ENCODE measurements at regions of chr2 and their contacts with region 1.

Region 1: GRCh38 chr2:85420536-85421259 is 2.2 kb downstream of the SH2D6 start:
- DNase-seq: peak; percentile 79
- H3K4me3 ChIP-seq: no peak overlapping the region
- H3K27ac ChIP-seq: peak overlapping the region; percentile 90
- H3K4me1 ChIP-seq: peaks cover 25% of the 10 kb centered on the region
- H3K27me3 ChIP-seq: no peaks in the 10 kb centered on the region
- CTCF ChIP-seq: peak; percentile 100
- POLR2A ChIP-seq: no peak

Region 2: DNA sequence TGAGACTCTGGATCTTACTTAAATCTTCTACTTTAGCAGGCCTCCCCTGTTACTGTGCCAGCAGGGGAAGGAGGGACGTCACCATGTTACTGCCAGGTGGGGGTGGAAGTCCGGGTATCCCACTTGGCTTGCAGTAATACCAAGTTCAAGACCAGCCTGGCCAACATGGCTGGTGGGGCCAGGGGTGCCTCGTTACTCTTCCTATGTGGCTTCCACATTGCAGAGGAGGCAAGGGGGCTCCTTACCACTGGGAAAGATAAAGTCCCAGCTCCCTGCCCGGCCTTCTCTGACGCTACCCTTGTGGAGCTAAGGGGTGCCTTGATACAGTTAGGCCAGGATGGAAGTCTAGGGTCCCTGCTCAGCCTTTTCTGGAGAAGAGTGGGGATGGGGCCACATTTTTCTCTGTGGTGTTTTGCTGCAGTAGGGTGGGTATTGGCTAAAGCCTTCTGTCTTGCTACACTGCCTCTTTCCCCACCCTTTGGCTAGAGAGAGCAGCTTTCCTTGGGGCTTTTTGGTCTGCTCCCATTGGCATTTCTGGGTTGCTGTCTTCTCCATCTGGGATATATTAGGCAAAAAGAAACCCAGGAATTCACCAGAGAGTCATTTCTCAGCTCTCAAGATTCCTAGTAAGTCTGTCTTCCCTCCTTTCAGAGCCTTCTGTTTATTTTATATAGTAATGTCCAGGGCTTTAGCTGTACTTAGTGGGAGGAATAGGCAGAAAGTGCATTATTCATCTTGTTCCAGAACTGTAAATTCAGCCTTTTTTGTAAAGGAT is 44.2 kb before region 1 on chr2:
- intact Hi-C with region 1: no loop called
- DNase-seq: no peak
- H3K4me3 ChIP-seq: no peak overlapping the region
- H3K27ac ChIP-seq: no peak overlapping the region
- H3K4me1 ChIP-seq: no peaks in the 10 kb centered on the region
- H3K27me3 ChIP-seq: no peaks in the 10 kb centered on the region
- CTCF ChIP-seq: no peak
- POLR2A ChIP-seq: no peak

Region 3: GRCh38 chr2:85551698-85552678 is 131.3 kb after region 1 on chr2:
- intact Hi-C with region 1: loop called (anchors 2 kb)
- DNase-seq: peak; percentile 88
- H3K4me3 ChIP-seq: no peak overlapping the region
- H3K27ac ChIP-seq: peak overlapping the region in 1 of 2 donors; percentile 4
- H3K4me1 ChIP-seq: no peaks in the 10 kb centered on the region
- H3K27me3 ChIP-seq: no peaks in the 10 kb centered on the region
- CTCF ChIP-seq: peak; percentile 80 to 96 (median 95)
- POLR2A ChIP-seq: no peak

Region 4: DNA sequence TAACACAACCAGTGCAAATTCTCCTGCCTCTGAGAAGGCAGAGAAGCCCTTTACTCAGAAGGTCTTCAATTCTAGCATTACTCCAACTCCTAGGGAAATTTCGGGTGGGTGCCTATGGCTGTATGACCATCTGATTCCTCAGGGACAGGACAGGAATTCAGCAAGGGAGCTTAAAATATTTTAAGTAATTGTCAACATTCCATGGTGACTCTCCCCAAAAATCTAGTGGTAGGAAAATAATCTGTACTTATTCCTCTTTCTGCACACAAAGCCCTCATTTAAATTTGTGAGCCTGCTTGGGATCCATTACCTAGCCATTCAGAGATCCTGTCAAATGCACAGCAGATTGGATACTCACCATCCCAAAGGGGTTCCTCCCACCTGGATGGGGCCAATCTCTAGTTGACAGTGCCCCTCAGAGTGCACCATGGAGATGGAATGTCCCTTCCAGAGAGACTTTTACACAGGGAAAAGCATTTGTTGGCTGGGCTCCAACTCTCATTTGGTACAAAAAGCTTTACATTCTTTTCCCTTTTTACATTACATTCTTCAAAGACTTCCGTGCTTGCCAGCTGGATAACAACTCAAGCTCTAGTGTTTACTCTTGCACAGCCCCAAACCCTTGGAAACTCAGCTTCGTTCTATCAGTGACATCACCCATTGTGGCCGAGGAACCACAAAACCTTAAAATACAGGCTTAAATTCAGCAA is 184.9 kb after region 1 on chr2:
- intact Hi-C with region 1: loop called (anchors 5 kb)
- DNase-seq: no peak
- H3K4me3 ChIP-seq: no peak overlapping the region
- H3K27ac ChIP-seq: peak overlapping the region; percentile 38 to 90
- H3K4me1 ChIP-seq: peaks cover 23% of the 10 kb centered on the region
- H3K27me3 ChIP-seq: no peaks in the 10 kb centered on the region
- CTCF ChIP-seq: no peak
- POLR2A ChIP-seq: no peak

Measured in prostate gland (tissue), 2 donors.